ENCODE measurements at regions of chr7 and their contacts with region 1.

Region 1: GRCh38 chr7:7424151-7424873 is 111.4 kb downstream of the COL28A1 start:
- DNase-seq: peak; percentile 41 to 58 (median 55)
- ATAC-seq: peak; percentile 58 to 94 (median 86)
- H3K4me3 ChIP-seq: peak overlapping the region; percentile 14 to 65 (median 50)
- H3K27ac ChIP-seq: peak overlapping the region in 1 of 12 donors; percentile 11
- H3K4me1 ChIP-seq: peaks cover 0 to 11% (median 0%) of the 10 kb centered on the region in 12 donors
- H3K27me3 ChIP-seq: no peaks in the 10 kb centered on the region
- CTCF ChIP-seq: peak; percentile 52 to 82 (median 70)
- POLR2A ChIP-seq: no peak

Region 2: GRCh38 chr7:7542251-7542835 is 118.0 kb after region 1 on chr7:
- intact Hi-C with region 1: loop called (anchors 2 to 5 kb)
- DNase-seq: no peak
- ATAC-seq: no peak
- H3K4me3 ChIP-seq: no peak overlapping the region
- H3K27ac ChIP-seq: no peak overlapping the region
- H3K4me1 ChIP-seq: no peaks in the 10 kb centered on the region
- H3K27me3 ChIP-seq: no peaks in the 10 kb centered on the region
- CTCF ChIP-seq: no peak
- POLR2A ChIP-seq: no peak

Region 3: GRCh38 chr7:8295638-8296361 is 871.5 kb after region 1 on chr7:
- intact Hi-C with region 1: loop called in 2 of 10 experiments (anchors 10 kb)
- DNase-seq: peak in 2 of 5 donors; percentile 29 to 40
- ATAC-seq: peak; percentile 64 to 97 (median 91)
- H3K4me3 ChIP-seq: no peak overlapping the region
- H3K27ac ChIP-seq: no peak overlapping the region
- H3K4me1 ChIP-seq: peaks cover 0 to 1% (median 0%) of the 10 kb centered on the region in 12 donors
- H3K27me3 ChIP-seq: no peaks in the 10 kb centered on the region
- CTCF ChIP-seq: peak; percentile 55 to 86 (median 76)
- POLR2A ChIP-seq: no peak